ENCODE measurements at regions of chr5 and their contacts with region 1.

Region 1: DNA sequence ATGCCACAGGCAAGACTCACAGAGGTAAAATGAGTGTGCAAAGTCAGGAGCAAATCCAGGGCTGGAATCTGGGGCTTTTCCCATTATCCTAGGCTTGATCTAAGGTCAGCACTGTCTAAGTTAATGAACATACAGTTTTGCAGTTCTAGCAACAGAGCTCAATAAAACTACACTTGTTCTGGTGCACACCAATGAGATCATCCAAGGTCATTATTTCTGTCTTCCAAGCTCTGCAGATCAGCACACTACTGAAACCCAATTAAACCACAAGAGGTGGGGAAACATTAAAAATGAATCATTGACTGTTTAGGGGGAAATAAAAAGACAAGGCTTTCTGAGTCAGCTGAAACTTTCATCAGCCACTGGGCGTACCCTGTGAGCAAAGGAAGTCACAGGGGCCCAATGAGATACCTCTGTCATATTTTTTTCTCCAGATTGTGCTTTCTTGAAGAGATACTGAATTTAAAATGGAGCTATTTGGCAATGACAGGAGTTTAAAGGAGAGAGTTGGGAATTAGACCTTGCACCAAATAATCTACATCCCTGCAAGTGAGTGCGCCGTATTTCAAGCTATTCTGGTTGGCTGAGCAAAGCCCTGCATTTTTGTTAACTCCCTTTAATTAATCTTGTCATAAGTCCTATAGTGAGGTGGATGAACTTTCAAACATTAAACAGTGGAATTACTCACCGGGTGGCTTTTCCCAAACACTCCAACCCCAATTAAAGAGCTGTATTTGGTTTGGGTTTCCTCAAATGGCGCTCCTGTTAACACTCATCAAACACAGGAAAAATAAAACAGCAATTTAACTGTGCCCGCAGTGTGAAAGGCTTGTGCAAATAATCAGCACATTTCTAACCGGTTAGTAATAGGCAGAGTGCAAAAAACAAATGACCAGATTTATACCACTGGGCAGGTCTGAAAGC is 662.4 kb upstream of the ZNF608 start:
- DNase-seq: peak; percentile 39

Region 2: DNA sequence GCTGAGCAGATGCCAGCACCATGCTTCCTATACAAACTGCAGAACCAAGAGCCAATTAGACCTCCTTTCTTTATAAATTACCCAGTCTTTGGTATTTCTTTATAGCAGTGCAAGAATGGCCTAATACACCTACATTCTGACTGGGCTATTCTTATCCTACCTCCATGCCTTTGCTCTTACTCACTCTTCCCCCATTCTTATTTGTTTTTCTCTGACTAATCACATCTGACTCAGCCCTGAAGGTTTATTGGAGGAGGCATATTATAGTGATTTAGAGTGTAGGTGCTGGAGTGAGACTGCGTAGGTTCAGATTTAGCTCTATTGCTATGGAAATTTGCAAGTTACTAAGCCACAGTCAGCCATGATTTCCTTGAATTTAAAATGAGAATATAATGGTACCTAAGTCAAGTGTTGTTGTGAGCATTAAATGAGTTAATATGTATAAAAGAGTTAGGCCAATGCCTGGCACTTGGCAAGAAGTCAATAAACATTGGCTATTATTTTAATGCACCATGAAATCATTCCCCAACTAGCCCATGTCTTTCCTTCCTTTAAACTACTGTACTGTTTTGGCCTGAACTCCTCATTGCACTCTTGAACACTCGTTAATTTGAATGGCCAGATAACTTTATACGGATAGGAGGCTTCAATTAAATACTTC is 131.2 kb before region 1 on chr5:
- CTCF ChIA-PET with region 1: interaction called, 6 read pairs
- POLR2A ChIA-PET with region 1: interaction called, 26 read pairs
- DNase-seq: peak; percentile 52

Region 3: DNA sequence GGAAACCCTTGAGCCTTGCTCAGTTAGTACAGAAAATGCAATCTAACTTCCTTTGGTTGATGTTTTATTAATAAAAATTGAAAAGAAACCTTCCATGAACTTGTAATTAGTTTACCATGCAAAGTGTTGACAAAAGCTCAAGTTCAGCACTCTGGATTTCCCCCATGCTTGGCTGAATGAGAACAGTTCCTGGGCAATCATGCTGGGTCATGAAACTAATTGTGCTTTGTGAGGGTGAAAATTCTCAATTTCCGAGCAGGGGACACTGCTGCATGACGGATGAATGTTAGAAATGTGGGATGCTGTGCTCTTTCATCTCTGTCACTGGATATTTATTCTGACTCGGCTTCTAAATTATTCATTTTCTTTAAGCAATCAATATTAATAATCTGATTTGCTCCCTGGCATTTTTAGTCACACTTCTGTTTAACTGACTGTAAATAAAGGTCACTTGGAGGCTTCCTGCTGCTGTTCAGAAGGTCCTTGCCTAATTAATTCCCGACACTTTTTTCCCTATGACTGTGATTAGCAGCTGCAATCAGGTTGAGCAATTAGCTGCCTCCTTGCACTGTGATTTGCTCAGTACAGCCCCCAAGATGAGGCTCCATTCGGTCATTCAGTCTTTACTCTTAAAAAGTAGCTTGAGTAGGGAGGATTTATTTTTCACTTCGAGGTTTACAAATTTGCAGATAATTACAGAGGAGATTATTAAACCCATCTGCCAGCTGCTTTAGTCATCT is 15.7 kb after region 1 on chr5:
- CTCF ChIA-PET with region 1: no interaction called
- POLR2A ChIA-PET with region 1: no interaction called
- DNase-seq: no peak

Region 4: DNA sequence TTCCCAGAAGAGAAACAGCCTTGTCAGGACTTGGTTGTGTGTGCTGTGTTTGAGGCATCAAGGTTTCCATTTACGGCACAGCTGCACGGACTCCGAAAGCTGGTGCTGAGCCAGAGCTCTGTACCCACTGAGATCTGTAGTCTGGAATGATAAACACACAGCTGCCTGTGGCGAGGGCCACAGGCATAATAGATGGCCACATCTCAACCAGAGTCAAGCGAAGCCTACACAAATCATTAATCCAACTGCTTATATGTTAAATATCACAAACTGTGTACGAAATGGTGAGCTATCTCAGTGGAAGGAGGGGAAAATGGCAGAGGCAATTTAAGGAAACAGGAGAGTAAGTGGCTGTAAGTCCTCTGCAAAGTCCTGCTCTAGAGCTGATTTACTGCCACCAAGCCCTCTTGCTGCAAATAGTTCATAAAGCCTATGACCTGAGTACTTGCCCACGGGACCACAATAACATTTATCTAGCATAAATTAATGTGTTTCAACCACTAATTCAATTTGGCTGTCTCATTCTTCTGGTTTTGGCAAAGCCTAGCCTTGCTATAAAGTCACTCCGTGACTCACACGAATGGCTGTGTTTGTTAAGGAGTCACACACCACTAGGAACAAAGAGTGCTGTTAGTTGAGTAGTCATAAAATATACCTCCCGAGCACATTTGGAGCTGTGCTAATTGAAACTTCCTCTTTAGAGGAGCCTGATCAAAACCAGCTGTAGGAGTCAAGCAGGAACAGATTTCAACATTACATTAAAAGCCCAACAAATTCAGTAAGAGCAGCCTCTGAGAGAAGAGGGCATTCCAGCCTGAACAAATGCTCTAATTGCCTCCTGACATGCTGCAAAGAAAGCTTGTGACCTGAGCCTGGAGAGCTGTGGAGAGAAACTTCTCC is 76.1 kb after region 1 on chr5:
- CTCF ChIA-PET with region 1: no interaction called
- POLR2A ChIA-PET with region 1: interaction called, 18 read pairs
- DNase-seq: peak; percentile 48

Measured in HEK293T (cell line).